Vagina (tissue), 2 donors: ENCODE measurements at regions of chr9 and their contacts with region 1.

Region 1: DNA sequence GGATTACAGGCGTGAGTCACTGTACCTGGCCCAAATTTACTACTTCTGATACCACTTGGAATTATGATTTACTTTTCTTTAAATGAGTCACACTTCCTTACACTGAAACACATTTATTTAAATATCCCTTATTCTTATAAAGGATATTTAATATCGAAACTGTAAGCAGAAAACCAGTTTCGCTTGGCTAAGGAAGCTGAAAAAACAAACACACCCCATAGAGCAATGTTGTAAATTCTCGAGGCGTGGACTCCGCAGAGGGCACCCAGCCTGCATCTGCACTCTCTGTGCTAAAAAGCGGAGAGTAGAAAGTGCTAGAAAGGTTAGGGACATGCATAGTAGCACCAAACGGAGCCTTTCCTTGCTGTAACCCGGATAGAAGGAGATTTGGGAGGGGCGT is 86.5 kb downstream of the HMCN2 start:
- DNase-seq: no peak
- H3K4me3 ChIP-seq: no peak overlapping the region
- H3K27ac ChIP-seq: no peak overlapping the region
- H3K4me1 ChIP-seq: no peaks in the 10 kb centered on the region
- H3K27me3 ChIP-seq: no peaks in the 10 kb centered on the region
- CTCF ChIP-seq: no peak
- POLR2A ChIP-seq: no peak

Region 2: DNA sequence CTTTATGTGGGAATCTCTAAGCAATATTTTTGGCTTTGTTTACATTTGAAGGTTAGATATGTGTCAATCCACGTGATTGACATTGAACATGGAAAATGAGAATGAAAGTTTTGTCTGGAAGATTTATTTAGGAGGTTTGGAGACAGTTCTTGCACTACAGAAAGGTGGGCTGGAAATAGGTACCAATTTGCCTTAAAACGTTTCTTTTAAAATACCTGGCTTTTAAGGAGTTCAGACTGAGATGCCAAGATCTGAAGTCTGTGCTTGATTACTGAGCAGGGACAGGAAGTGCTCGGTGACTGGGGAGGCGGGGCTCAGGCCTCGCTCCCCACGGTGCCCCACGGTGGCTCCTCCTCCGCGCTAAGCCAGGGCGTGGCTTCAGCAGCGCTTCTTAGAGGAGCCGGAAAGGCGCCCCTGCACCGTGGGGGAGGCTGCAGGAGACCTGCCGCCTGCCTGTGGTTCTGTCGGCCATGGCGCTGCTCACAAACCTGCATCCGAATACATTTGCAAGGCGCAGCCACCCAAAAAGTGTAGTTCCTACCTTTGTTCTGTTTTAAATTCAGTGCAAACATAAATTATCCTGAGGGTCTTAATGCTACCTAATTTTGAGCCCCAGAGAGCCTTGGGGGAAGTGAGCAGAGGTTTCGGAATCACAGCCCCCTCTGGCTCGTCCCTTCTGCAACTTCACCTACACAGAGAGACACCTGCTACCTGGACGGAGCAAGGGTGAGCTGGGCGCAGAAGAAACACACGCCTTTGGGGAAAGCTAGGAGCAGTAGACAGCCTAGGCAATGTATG is 467.7 kb before region 1 on chr9:
- intact Hi-C with region 1: loop called (anchors 10 kb)
- DNase-seq: peak in 1 of 2 donors; percentile 88
- H3K4me3 ChIP-seq: peak overlapping the region; percentile 41 to 46
- H3K27ac ChIP-seq: peak overlapping the region; percentile 85
- H3K4me1 ChIP-seq: peaks cover 31% of the 10 kb centered on the region
- H3K27me3 ChIP-seq: no peaks in the 10 kb centered on the region
- CTCF ChIP-seq: no peak
- POLR2A ChIP-seq: peak in 1 of 2 donors; percentile 31

Region 3: DNA sequence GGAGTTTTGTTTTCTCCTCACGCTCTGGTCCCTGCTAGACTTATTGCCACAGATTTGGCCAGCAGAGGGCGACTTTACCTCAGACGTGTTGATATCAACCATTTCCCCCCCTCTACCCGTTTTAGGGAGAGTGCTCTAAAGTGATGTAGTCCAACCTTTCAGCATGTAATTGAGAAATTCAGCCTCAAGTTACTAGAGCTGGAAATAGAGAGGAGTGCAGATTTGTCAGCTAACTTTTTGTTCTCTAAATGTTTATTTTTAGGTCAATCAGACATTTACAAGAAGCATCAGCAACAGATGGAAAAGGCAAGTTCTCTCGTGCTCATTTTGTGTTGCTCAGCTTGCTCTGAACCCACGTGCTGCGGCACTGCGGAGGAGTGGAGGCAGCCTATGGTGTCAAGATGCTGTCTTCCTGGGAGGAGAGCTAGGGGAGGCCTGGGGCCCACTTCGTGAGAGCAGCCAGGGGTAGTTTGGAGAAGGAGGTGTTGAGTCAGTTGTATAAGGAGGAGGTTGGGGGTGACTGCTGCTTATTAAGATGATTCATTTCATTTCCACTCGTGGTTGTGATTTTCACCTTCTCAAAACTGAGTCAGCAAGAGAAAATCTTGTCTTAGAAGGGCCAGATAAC is 244.7 kb before region 1 on chr9:
- intact Hi-C with region 1: loop called (anchors 2 kb)
- DNase-seq: peak in 1 of 2 donors; percentile 95
- H3K4me3 ChIP-seq: no peak overlapping the region
- H3K27ac ChIP-seq: peak overlapping the region; percentile 44
- H3K4me1 ChIP-seq: peaks cover 8% of the 10 kb centered on the region
- H3K27me3 ChIP-seq: no peaks in the 10 kb centered on the region
- CTCF ChIP-seq: peak; percentile 67 to 88 (median 81)
- POLR2A ChIP-seq: no peak

Region 4: GRCh38 chr9:130333712-130334062 is 18.4 kb before region 1 on chr9:
- intact Hi-C with region 1: loop called (anchors 2 kb)
- DNase-seq: no peak
- H3K4me3 ChIP-seq: no peak overlapping the region
- H3K27ac ChIP-seq: no peak overlapping the region
- H3K4me1 ChIP-seq: peaks cover 36% of the 10 kb centered on the region
- H3K27me3 ChIP-seq: no peaks in the 10 kb centered on the region
- CTCF ChIP-seq: no peak
- POLR2A ChIP-seq: no peak